ENCODE measurements at regions of chr2 and their contacts with region 1.

Region 1: GRCh38 chr2:33051586-33052360 is 105.0 kb downstream of the LTBP1 start:
- DNase-seq: peak in 1 of 2 donors; percentile 45
- H3K4me3 ChIP-seq: no peak overlapping the region
- H3K27ac ChIP-seq: peak overlapping the region; percentile 41 to 48
- H3K4me1 ChIP-seq: peaks cover 0 to 28% (median 8%) of the 10 kb centered on the region in 4 donors
- H3K27me3 ChIP-seq: no peaks in the 10 kb centered on the region
- CTCF ChIP-seq: no peak

Region 2: DNA sequence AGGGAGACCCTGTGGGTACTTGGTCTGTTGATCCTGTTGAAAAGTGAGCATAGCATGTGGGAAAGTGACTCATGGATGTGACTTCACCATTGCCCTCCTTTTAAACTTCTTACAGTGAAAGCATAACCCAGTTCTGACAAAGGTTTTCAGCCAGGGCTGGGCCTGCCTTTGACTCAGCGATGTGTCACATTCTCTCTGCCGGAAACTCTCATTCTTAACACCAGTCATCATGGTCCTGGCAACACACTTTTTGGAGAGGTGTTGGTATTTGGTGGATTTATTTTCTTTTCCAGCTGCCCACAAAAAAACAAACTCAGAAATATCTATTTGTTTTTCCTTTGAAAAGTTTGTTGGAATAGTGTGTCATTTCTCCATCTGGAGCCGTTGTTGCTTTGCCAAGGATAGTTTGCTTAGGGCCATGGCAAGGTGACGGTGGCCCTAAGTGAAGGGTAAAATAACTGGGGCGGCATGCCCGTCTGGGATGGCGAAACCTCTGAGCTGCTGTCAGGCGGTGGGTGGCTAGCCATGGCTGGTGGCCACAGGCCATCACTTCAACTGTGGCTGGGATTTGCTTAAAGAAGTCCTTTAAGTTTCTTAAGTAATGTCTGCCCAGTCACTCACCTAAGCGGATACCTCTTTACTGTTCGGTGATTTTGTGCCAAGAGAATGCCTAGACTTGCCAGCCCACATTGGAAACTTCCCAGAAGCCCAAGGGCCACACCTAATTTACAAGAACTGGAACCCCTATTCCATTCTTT is 18.3 kb after region 1 on chr2:
- intact Hi-C with region 1: no loop called
- DNase-seq: peak; percentile 88 to 91
- H3K4me3 ChIP-seq: peak overlapping the region in 1 of 2 donors; percentile 20
- H3K27ac ChIP-seq: peak overlapping the region; percentile 74 to 77
- H3K4me1 ChIP-seq: peaks cover 0 to 91% (median 32%) of the 10 kb centered on the region in 4 donors
- H3K27me3 ChIP-seq: no peaks in the 10 kb centered on the region
- CTCF ChIP-seq: no peak

Region 3: GRCh38 chr2:33372940-33373553 is 321.3 kb after region 1 on chr2:
- intact Hi-C with region 1: loop called (anchors 10 kb)
- DNase-seq: no peak
- H3K4me3 ChIP-seq: no peak overlapping the region
- H3K27ac ChIP-seq: peak overlapping the region; percentile 32 to 38
- H3K4me1 ChIP-seq: peaks cover 0 to 36% (median 6%) of the 10 kb centered on the region in 4 donors
- H3K27me3 ChIP-seq: no peaks in the 10 kb centered on the region
- CTCF ChIP-seq: peak; percentile 61 to 67